Naive thymus-derived CD4-positive, alpha-beta T cell (primary cell): ENCODE measurements at regions of chr5 and their contacts with region 1.

Region 1: DNA sequence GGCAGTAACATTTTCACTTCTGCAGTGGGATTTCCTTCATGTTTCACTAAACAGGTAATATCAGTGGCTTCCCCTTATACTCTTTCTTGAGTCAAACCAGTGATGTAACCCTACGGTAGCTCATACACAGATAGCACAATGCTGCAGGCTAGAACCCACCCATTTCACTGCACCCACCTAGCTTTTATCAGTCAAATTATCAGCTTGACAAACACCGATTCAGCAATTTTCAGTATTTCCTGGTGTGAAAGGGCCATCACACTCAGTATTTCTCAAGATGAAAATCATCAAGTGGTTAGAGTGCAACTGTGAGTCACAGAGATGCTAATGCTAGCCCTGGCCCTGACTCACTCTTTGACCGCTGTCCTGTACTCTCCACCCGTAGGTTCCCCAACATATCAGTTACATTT is 242.3 kb upstream of the PTGER4 start:
- DNase-seq: peak in 1 of 9 donors; percentile 7
- ATAC-seq: peak; percentile 67
- H3K4me3 ChIP-seq: peak overlapping the region; percentile 24
- H3K4me3 Mint-ChIP-seq: peak overlapping the region in 6 of 10 donors; percentile 10 to 75 (median 38)
- H3K27ac ChIP-seq: peak overlapping the region; percentile 79
- H3K27ac Mint-ChIP-seq: peak overlapping the region; percentile 71 to 96 (median 91)
- H3K4me1 ChIP-seq: peaks cover 34 to 39% of the 10 kb centered on the region in 2 donors
- H3K4me1 Mint-ChIP-seq: peaks cover 23 to 82% (median 68%) of the 10 kb centered on the region in 7 donors
- H3K27me3 ChIP-seq: no peaks in the 10 kb centered on the region
- H3K27me3 Mint-ChIP-seq: no peaks in the 10 kb centered on the region

Region 2: GRCh38 chr5:40021007-40021406 is 416.4 kb before region 1 on chr5:
- CTCF ChIA-PET with region 1: no interaction called
- POLR2A ChIA-PET with region 1: no interaction called
- intact Hi-C with region 1: loop called in 1 of 2 experiments (anchors 5 kb)
- DNase-seq: no peak
- ATAC-seq: no peak
- H3K4me3 ChIP-seq: no peak overlapping the region
- H3K4me3 Mint-ChIP-seq: no peak overlapping the region
- H3K27ac ChIP-seq: no peak overlapping the region
- H3K27ac Mint-ChIP-seq: no peak overlapping the region
- H3K4me1 ChIP-seq: no peaks in the 10 kb centered on the region
- H3K4me1 Mint-ChIP-seq: peaks cover 0 to 4% (median 0%) of the 10 kb centered on the region in 7 donors
- H3K27me3 ChIP-seq: no peaks in the 10 kb centered on the region
- H3K27me3 Mint-ChIP-seq: peaks cover 0 to 11% (median 4%) of the 10 kb centered on the region in 5 donors

Region 3: DNA sequence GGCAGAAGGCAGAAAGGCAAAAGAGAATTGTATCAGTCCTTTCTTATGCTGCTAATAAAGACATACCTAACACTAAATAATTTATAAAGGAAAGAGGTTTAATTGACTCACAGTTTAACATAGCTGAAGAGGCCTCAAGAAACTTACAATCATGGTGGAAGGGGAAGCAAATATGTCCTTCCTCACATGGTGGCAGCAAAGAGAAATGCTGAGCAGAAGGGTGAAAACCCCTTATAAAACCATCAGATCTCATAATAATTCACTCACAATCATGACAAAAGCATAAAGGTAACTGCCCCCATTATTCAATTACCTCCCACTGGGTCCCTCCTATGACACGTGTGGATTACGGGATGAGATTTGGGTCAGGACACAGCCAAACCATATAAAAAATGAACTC is 70.2 kb before region 1 on chr5:
- CTCF ChIA-PET with region 1: interaction called, 3 read pairs
- POLR2A ChIA-PET with region 1: interaction called, 3 read pairs
- intact Hi-C with region 1: loop called in 1 of 2 experiments (anchors 1 kb)
- DNase-seq: peak in 7 of 9 donors; percentile 18 to 53 (median 38)
- ATAC-seq: peak; percentile 54
- H3K4me3 ChIP-seq: no peak overlapping the region
- H3K4me3 Mint-ChIP-seq: no peak overlapping the region
- H3K27ac ChIP-seq: no peak overlapping the region
- H3K27ac Mint-ChIP-seq: peak overlapping the region in 6 of 9 donors; percentile 19 to 86 (median 66)
- H3K4me1 ChIP-seq: peaks cover 0 to under 1% of the 10 kb centered on the region in 2 donors
- H3K4me1 Mint-ChIP-seq: peaks cover 0 to 17% (median 8%) of the 10 kb centered on the region in 7 donors
- H3K27me3 ChIP-seq: no peaks in the 10 kb centered on the region
- H3K27me3 Mint-ChIP-seq: no peaks in the 10 kb centered on the region

Region 4: DNA sequence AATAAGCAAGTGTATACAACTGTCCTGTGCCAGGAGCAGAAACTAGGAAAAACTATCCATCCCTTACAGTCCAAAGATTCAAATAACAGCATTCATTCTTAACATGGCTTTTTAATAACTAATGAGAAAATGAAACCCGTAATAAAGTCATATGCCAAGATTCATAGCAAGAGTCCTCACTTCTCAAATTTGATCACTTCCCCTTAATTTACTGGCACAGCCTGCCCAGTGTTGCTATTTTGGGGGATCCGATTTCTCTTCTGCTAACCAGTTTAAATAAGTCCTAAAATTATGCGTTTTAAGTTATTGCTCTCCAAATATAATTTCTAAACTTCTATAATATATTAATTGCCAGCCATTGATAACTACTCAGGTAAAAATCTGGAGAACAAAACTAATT is 65.3 kb after region 1 on chr5:
- CTCF ChIA-PET with region 1: no interaction called
- POLR2A ChIA-PET with region 1: interaction called, 3 read pairs
- intact Hi-C with region 1: loop called in 1 of 2 experiments (anchors 5 kb)
- DNase-seq: no peak
- ATAC-seq: no peak
- H3K4me3 ChIP-seq: no peak overlapping the region
- H3K4me3 Mint-ChIP-seq: no peak overlapping the region
- H3K27ac ChIP-seq: no peak overlapping the region
- H3K27ac Mint-ChIP-seq: no peak overlapping the region
- H3K4me1 ChIP-seq: no peaks in the 10 kb centered on the region
- H3K4me1 Mint-ChIP-seq: peaks cover 5 to 14% (median 6%) of the 10 kb centered on the region in 7 donors
- H3K27me3 ChIP-seq: no peaks in the 10 kb centered on the region
- H3K27me3 Mint-ChIP-seq: no peaks in the 10 kb centered on the region